ENCODE measurements at regions of chrX and their contacts with region 1.

Region 1: GRCh38 chrX:72181178-72182125 is at the start of gene PIN4:
- DNase-seq: peak; percentile 65 to 94 (median 82)
- ATAC-seq: peak; percentile 87
- H3K4me3 ChIP-seq: peak within 1 kb of the TSS; percentile 70 to 83
- H3K4me3 Mint-ChIP-seq: no peak within 1 kb of the TSS
- H3K27ac ChIP-seq: peak within 1 kb of the TSS; percentile 57 to 63
- H3K27ac Mint-ChIP-seq: peak within 1 kb of the TSS; percentile 13
- H3K4me1 ChIP-seq: peaks cover 25% of the 10 kb centered on the region
- H3K4me1 Mint-ChIP-seq: peaks cover 14% of the 10 kb centered on the region
- H3K27me3 ChIP-seq: no peaks in the 10 kb centered on the region
- H3K27me3 Mint-ChIP-seq: no peaks in the 10 kb centered on the region
- CTCF ChIP-seq: no peak
- total RNA-seq, gene PIN4: 0.35 to 1.1 TPM

Region 2: DNA sequence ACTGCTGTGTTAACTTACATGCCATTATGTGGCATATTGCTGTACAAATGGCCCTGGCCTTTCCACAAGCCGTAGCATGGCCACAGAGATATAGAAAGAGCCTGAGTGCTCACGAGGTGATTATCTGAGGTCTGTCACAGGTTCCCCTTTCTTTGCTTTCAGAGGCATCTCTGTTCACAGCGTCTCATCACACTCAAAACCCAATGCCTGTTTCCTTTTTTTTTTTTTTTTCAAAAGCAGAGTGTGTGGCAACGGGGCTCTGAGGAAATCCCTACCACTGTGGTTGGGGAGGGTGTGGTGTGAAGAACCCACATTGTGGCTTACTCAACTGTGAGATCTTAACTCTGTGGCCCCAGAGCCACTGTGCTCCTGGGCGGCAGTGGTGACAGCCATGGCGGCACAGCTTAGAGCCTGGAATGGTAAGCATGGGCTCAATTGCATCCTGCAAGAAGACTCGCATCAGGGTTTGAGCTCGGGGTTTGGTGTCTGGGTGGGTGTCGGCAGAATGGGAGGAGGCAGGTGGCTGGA is 80.6 kb before region 1 on chrX:
- CTCF ChIA-PET with region 1: no interaction called
- POLR2A ChIA-PET with region 1: no interaction called
- intact Hi-C with region 1: loop called in 1 of 2 experiments (anchors 1 kb)
- DNase-seq: peak; percentile 44 to 92 (median 72)
- ATAC-seq: peak; percentile 66
- H3K4me3 ChIP-seq: peak overlapping the region in 1 of 2 experiments; percentile 55
- H3K4me3 Mint-ChIP-seq: peak overlapping the region; percentile 79
- H3K27ac ChIP-seq: peak overlapping the region in 1 of 2 experiments; percentile 71
- H3K27ac Mint-ChIP-seq: peak overlapping the region; percentile 79
- H3K4me1 ChIP-seq: peaks cover 40% of the 10 kb centered on the region
- H3K4me1 Mint-ChIP-seq: peaks cover 43% of the 10 kb centered on the region
- H3K27me3 ChIP-seq: no peaks in the 10 kb centered on the region
- H3K27me3 Mint-ChIP-seq: peaks cover 16% of the 10 kb centered on the region
- CTCF ChIP-seq: no peak

Region 3: DNA sequence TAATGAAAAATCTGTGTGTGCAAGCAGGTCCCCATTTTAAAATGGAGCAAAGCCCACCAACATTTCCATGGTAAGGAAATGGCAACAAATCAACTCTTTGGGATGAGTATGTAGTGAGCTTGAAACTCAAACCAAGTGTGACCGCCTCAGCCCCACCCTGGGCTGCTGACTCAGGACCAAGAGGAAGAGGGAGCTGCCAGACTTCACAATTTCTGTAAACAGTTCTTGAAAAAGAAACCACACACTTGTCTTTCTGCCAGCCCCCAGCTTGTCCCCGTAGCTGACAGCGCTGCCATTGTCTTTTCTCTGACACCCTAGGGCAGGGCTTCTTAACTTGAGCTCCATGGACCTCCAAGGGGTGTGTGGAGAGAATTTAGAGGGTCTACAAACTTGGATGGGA is 60.1 kb before region 1 on chrX:
- CTCF ChIA-PET with region 1: no interaction called
- POLR2A ChIA-PET with region 1: no interaction called
- intact Hi-C with region 1: no loop called
- DNase-seq: peak in 8 of 9 experiments; percentile 30 to 77 (median 54)
- ATAC-seq: peak; percentile 84
- H3K4me3 ChIP-seq: peak overlapping the region in 1 of 2 experiments; percentile 7
- H3K4me3 Mint-ChIP-seq: peak overlapping the region; percentile 47
- H3K27ac ChIP-seq: peak overlapping the region in 1 of 2 experiments; percentile 58
- H3K27ac Mint-ChIP-seq: peak overlapping the region; percentile 77
- H3K4me1 ChIP-seq: peaks cover 17% of the 10 kb centered on the region
- H3K4me1 Mint-ChIP-seq: peaks cover 34% of the 10 kb centered on the region
- H3K27me3 ChIP-seq: no peaks in the 10 kb centered on the region
- H3K27me3 Mint-ChIP-seq: no peaks in the 10 kb centered on the region
- CTCF ChIP-seq: no peak

Region 4: GRCh38 chrX:72169008-72169728 is 12.3 kb before region 1 on chrX:
- CTCF ChIA-PET with region 1: no interaction called
- POLR2A ChIA-PET with region 1: interaction called, 4 read pairs
- intact Hi-C with region 1: loop called in 1 of 2 experiments (anchors 1 kb)
- DNase-seq: peak in 7 of 9 experiments; percentile 2 to 84 (median 44)
- ATAC-seq: peak; percentile 85
- H3K4me3 ChIP-seq: peak overlapping the region in 1 of 2 experiments; percentile 44
- H3K4me3 Mint-ChIP-seq: peak overlapping the region; percentile 81
- H3K27ac ChIP-seq: peak overlapping the region; percentile 45 to 73
- H3K27ac Mint-ChIP-seq: peak overlapping the region; percentile 96
- H3K4me1 ChIP-seq: no peaks in the 10 kb centered on the region
- H3K4me1 Mint-ChIP-seq: peaks cover 8% of the 10 kb centered on the region
- H3K27me3 ChIP-seq: no peaks in the 10 kb centered on the region
- H3K27me3 Mint-ChIP-seq: no peaks in the 10 kb centered on the region
- CTCF ChIP-seq: no peak

Region 5: DNA sequence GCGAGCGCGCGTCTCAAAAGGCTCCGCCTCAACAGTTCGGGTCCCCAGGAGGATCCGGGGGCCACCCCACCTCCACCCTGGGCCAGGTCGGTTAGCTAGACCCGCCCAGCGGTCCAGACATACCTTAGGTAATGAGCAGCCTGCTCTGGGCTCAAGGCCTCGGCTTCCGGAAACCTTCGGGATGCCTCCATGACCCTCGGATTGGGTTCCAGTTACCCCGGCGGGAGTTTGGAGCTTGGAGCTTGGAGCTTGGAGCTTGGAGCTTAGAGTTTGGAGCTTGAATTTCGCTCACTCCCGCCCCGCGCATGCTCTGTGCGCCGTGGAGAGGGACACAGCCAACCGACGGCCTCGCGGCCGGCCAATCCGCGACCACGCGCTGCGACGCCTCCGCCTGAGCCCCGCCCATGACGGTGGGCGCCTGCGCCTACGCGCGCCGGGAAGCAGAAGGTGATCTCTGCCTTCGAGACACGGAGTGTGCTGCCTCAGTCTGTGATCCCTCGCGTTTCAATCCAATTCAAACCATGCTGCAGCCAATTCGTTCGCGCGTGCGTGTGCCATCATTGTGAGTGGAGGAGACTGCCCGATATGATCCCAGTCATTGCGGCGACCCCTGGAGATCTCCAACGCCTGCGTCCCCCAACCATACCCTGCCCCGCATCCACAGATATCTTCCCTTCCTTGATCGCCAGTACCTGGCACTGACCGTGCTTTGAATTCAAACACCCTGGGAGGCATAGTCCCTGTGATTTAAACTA is 57.4 kb after region 1 on chrX and contains the start of gene ERCC6L:
- CTCF ChIA-PET with region 1: no interaction called
- POLR2A ChIA-PET with region 1: interaction called, 3 read pairs
- intact Hi-C with region 1: loop called in 1 of 2 experiments (anchors 2 kb)
- DNase-seq: peak; percentile 65 to 91 (median 79)
- ATAC-seq: peak; percentile 99
- H3K4me3 ChIP-seq: peak within 1 kb of the TSS; percentile 34 to 53
- H3K4me3 Mint-ChIP-seq: peak within 1 kb of the TSS; percentile 75
- H3K27ac ChIP-seq: no peak within 1 kb of the TSS
- H3K27ac Mint-ChIP-seq: peak within 1 kb of the TSS; percentile 64
- H3K4me1 ChIP-seq: peaks cover 5% of the 10 kb centered on the region
- H3K4me1 Mint-ChIP-seq: peaks cover 6% of the 10 kb centered on the region
- H3K27me3 ChIP-seq: no peaks in the 10 kb centered on the region
- H3K27me3 Mint-ChIP-seq: no peaks in the 10 kb centered on the region
- CTCF ChIP-seq: no peak
- total RNA-seq, gene ERCC6L: 0.11 TPM

Measured in CD8-positive, alpha-beta T cell (primary cell).